CD14-positive monocyte (primary cell): ENCODE measurements at regions of chr7 and their contacts with region 1.

Region 1: GRCh38 chr7:44196450-44196872 is 4.3 kb upstream of the YKT6 start:
- DNase-seq: peak in 1 of 3 donors; percentile 19
- H3K4me3 ChIP-seq: no peak overlapping the region
- H3K4me3 Mint-ChIP-seq: no peak overlapping the region
- H3K27ac ChIP-seq: no peak overlapping the region
- H3K27ac Mint-ChIP-seq: no peak overlapping the region
- H3K4me1 ChIP-seq: peaks cover 2 to 3% of the 10 kb centered on the region in 2 donors
- H3K4me1 Mint-ChIP-seq: peaks cover 2% of the 10 kb centered on the region
- H3K27me3 ChIP-seq: no peaks in the 10 kb centered on the region
- H3K27me3 Mint-ChIP-seq: peaks cover 8 to 13% (median 12%) of the 10 kb centered on the region in 3 donors
- CTCF ChIP-seq: peak; percentile 53

Region 2: DNA sequence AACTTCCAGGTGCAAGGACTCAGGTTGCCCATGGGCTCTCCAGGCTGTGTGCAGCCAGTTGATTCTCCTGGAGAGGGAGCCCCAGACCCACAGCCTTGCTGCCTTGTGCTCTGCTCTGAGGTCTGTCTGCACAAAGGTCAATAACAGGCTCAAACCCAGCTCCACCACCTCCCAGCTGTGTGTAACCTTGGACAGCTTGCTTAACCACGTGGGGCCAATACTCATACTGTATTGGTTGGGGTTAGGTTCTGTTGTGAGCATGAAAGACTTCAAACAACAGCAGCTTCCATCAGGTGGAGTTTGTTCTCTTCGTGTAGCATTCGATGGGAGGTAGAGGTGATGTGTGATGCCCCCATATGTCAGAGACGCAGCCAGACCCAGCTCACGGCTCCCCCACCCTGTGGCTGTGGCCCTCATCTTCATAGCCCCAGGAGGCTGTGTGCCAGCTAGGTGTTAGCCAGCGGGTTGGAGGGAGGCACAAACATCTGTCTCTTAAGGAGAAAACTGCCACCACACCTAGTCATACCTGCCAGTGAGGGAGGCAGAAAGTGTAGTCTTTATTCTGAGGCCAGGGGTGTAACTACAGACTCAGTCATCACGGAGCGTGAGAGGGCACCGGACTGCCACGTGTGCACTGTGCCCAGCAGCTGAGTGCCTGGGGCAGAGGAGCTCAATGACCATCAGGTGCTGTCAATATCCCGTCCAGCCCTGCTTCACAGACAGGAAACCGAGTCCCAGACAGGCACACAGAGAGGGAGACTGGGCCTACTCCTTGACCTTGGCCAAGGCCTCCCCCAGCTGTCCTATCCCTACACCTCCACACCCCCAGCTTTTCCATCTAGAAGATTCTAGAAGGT is 65.1 kb before region 1 on chr7:
- intact Hi-C with region 1: loop called in 1 of 2 experiments (anchors 10 kb)
- DNase-seq: no peak
- H3K4me3 ChIP-seq: no peak overlapping the region
- H3K4me3 Mint-ChIP-seq: no peak overlapping the region
- H3K27ac ChIP-seq: no peak overlapping the region
- H3K27ac Mint-ChIP-seq: peak overlapping the region in 1 of 7 donors; percentile 30
- H3K4me1 ChIP-seq: no peaks in the 10 kb centered on the region
- H3K4me1 Mint-ChIP-seq: no peaks in the 10 kb centered on the region
- H3K27me3 ChIP-seq: no peaks in the 10 kb centered on the region
- H3K27me3 Mint-ChIP-seq: peaks cover 3 to 7% (median 3%) of the 10 kb centered on the region in 3 donors
- CTCF ChIP-seq: no peak

Region 3: GRCh38 chr7:44486693-44487092 is 290.2 kb after region 1 on chr7:
- intact Hi-C with region 1: no loop called
- DNase-seq: no peak
- H3K4me3 ChIP-seq: no peak overlapping the region
- H3K4me3 Mint-ChIP-seq: no peak overlapping the region
- H3K27ac ChIP-seq: no peak overlapping the region
- H3K27ac Mint-ChIP-seq: peak overlapping the region in 1 of 7 donors; percentile 5
- H3K4me1 ChIP-seq: peaks cover 13 to 21% of the 10 kb centered on the region in 2 donors
- H3K4me1 Mint-ChIP-seq: peaks cover 46% of the 10 kb centered on the region
- H3K27me3 ChIP-seq: no peaks in the 10 kb centered on the region
- H3K27me3 Mint-ChIP-seq: peaks cover 0 to 2% (median 1%) of the 10 kb centered on the region in 3 donors
- CTCF ChIP-seq: no peak